CD4-positive, alpha-beta memory T cell (primary cell): ENCODE measurements at regions of chr19 and their contacts with region 1.

Region 1: DNA sequence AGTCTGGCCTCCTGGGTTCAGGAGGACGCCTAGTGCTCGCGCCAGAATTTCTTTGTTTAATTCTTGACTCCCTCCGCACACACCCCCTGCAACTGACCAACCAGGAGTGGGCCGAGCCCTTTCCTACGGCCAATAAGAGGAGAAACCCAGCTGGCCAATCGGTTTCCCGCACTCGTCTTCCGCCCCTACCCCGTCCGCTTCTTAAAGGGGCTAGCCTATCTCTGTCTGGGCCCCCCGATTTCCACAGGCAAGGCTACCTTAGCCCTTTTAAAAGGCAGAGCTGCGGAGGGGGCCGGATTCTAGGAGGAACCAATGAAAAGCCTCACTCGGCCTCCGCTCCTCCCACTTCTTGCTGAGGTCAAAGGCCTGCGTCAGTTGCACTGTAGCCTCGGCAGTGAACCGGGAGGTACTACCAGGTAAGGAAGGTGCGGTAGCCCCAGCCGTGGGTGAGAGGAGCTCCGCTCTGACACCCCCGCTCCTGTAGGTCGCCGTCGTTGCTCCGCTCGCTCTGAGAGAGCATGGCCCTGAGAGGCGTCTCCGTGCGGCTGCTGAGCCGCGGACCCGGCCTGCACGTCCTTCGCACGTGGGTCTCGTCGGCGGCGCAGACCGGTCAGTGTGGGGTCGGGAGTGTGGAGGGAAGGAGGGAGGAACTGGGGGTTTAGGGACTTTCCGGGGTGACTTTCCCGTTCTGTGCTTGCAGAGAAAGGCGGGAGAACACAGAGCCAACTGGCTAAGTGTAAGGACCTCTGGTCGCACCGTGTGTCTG is at the start of gene GCDH:
- DNase-seq: peak; percentile 96 to 99 (median 97)
- H3K4me3 ChIP-seq: peak within 1 kb of the TSS; percentile 84 to 88
- H3K4me3 Mint-ChIP-seq: peak within 1 kb of the TSS; percentile 97 to 99 (median 99)
- H3K27ac ChIP-seq: peak within 1 kb of the TSS; percentile 69
- H3K27ac Mint-ChIP-seq: peak within 1 kb of the TSS; percentile 93 to 99 (median 97)
- H3K4me1 ChIP-seq: peaks cover 22% of the 10 kb centered on the region
- H3K4me1 Mint-ChIP-seq: peaks cover 14 to 37% (median 25%) of the 10 kb centered on the region in 4 donors
- H3K27me3 ChIP-seq: no peaks in the 10 kb centered on the region
- H3K27me3 Mint-ChIP-seq: no peaks in the 10 kb centered on the region
- total RNA-seq, gene GCDH: 63.9 to 66.1 TPM

Region 2: DNA sequence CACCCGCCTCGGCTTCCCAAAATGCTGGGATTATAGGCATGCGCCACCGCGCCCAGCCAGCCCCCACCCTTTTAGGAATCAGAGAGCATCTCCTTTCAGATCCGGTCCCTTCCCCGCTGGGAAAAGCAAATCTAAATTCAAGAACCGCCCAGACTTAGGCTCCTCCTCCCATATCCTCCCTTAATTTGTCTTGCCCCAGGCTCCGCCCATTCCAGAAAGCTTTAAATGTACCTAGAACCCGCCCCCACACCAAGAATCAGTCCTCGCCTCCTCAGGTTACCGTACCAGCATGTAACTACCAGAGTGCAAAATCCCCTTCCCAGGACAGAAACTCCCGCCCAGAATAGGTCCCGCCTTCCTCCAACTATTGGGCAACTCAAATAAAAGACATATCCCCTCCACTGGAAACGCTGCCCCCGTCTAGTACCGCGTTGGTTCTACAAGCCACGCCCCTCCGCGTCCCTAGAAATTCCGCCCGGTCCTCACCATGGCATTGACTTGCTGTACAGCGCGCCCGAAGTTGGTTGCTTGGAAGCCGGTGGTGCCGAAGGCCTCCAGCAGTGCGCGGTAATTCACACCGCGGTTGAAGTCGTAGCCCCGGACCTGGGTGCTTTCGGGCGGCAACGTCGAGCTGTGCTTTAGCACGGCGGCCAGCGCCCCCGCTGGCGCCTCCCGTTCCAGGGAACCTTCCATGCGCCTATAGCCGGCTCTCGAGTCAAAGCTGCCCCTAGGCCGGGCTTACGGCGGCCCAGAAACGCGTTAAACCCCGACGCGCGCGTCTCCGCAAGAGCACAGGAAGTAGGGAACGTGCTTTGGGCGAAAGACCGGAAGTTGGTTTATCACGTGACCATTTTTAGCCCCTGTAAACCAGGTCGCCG is 209.7 kb before region 1 on chr19 and contains the start of gene DHPS:
- CTCF ChIA-PET with region 1: no interaction called
- POLR2A ChIA-PET with region 1: no interaction called
- intact Hi-C with region 1: no loop called
- DNase-seq: peak; percentile 90 to 96 (median 94)
- H3K4me3 ChIP-seq: peak within 1 kb of the TSS; percentile 73 to 98
- H3K4me3 Mint-ChIP-seq: peak within 1 kb of the TSS; percentile 90 to 99 (median 98)
- H3K27ac ChIP-seq: peak within 1 kb of the TSS; percentile 98
- H3K27ac Mint-ChIP-seq: peak within 1 kb of the TSS; percentile 83 to 99 (median 97)
- H3K4me1 ChIP-seq: peaks cover 22% of the 10 kb centered on the region
- H3K4me1 Mint-ChIP-seq: peaks cover 12 to 35% (median 25%) of the 10 kb centered on the region in 4 donors
- H3K27me3 ChIP-seq: no peaks in the 10 kb centered on the region
- H3K27me3 Mint-ChIP-seq: no peaks in the 10 kb centered on the region
- total RNA-seq, gene DHPS: 195 to 197 TPM

Region 3: DNA sequence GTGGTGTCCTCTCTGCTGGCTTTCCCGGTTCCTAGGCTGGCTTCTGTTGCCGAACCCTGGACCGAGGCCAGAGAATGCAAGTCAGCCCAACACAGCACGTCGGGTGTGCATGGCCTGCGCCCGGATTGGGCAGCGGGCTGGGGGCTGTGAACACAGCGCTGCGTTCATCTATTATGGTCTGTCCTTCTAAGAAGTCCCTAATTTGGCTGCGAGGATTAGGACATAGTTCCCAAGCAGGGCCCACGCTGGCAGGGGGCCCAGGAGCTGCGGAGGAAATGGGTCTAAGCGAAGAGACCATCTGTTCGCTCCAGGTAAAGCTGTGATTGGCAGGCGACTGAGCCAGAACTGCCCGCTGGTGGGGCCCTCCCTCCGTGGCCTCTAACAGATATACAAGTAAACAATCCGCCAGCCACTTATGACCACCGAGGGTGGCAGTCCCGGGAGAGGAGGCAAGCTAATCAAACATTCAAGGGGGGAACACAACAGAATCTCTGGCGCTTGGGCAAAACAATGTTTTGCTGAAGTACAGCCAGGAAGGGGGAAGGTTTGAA is 22.1 kb after region 1 on chr19:
- CTCF ChIA-PET with region 1: interaction called, 8 read pairs
- POLR2A ChIA-PET with region 1: interaction called, 49 read pairs
- intact Hi-C with region 1: no loop called
- DNase-seq: no peak
- H3K4me3 ChIP-seq: no peak overlapping the region
- H3K4me3 Mint-ChIP-seq: peak overlapping the region in 2 of 8 donors; percentile 5 to 31
- H3K27ac ChIP-seq: no peak overlapping the region
- H3K27ac Mint-ChIP-seq: peak overlapping the region in 5 of 7 donors; percentile 3 to 98 (median 88)
- H3K4me1 ChIP-seq: peaks cover 21% of the 10 kb centered on the region
- H3K4me1 Mint-ChIP-seq: peaks cover 9 to 29% (median 18%) of the 10 kb centered on the region in 4 donors
- H3K27me3 ChIP-seq: no peaks in the 10 kb centered on the region
- H3K27me3 Mint-ChIP-seq: no peaks in the 10 kb centered on the region